ENCODE measurements at regions of chr1 and their contacts with region 1.

Region 1: GRCh38 chr1:17244816-17245740 is 3.8 kb upstream of the PADI3 start:
- DNase-seq: peak; percentile 60
- H3K4me3 Mint-ChIP-seq: no peak overlapping the region
- H3K27ac Mint-ChIP-seq: no peak overlapping the region
- H3K4me1 Mint-ChIP-seq: peaks cover 13% of the 10 kb centered on the region
- H3K27me3 Mint-ChIP-seq: no peaks in the 10 kb centered on the region
- CTCF ChIP-seq: no peak

Region 2: DNA sequence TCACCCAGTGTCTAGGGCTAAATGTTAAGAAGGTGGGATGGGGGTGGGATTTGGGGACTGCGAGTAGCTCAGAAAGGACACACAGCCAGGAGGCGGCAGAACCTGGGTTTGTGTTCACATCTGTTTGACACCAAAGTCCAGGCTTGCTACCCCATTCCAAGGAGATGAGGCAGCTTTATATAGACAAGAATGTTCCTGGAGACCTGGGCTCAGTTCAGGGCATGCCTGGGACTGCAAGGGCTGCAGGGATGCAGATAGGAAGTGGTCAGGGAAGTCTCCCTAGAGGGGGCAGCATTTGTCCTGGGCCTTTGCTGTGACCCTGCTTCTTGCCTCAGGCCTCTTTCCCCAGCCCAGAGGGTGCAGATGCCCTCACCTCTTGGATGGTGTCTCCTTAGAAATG is 20.1 kb after region 1 on chr1:
- CTCF ChIA-PET with region 1: interaction called, 10 read pairs
- POLR2A ChIA-PET with region 1: interaction called, 4 read pairs
- intact Hi-C with region 1: no loop called
- DNase-seq: no peak
- H3K4me3 Mint-ChIP-seq: no peak overlapping the region
- H3K27ac Mint-ChIP-seq: no peak overlapping the region
- H3K4me1 Mint-ChIP-seq: peaks cover 4% of the 10 kb centered on the region
- H3K27me3 Mint-ChIP-seq: no peaks in the 10 kb centered on the region
- CTCF ChIP-seq: no peak

Measured in MCF 10A (cell line).